ENCODE measurements at regions of chr7 and their contacts with region 1.

Region 1: GRCh38 chr7:30019960-30020359 is 6.5 kb downstream of the FKBP14 start:
- DNase-seq: no peak
- H3K4me3 ChIP-seq: no peak overlapping the region
- H3K27ac ChIP-seq: no peak overlapping the region
- H3K4me1 ChIP-seq: peaks cover 10% of the 10 kb centered on the region
- H3K27me3 ChIP-seq: no peaks in the 10 kb centered on the region
- CTCF ChIP-seq: no peak

Region 2: DNA sequence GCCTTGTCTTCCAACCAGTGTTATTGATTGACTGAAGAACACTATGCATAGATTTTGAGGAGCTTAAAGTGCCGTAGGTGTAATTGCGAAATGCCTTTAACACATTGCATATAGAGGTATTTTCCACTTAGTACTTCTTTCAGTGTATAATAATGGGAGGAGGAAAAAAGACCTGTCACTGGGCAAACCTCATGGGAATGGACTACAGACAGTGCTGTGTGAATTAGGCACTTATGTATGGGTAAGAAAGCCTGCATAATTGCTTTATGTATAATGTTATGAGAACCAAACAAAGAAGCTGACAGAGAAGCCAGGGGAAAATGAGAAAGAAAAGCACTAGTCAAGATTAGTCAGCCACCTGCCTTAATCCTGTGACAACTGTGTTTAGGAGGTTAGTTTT is 18.0 kb before region 1 on chr7:
- CTCF ChIA-PET with region 1: no interaction called
- POLR2A ChIA-PET with region 1: no interaction called
- intact Hi-C with region 1: loop called (anchors 2 kb)
- DNase-seq: peak; percentile 49
- H3K4me3 ChIP-seq: no peak overlapping the region
- H3K27ac ChIP-seq: no peak overlapping the region
- H3K4me1 ChIP-seq: peaks cover 12% of the 10 kb centered on the region
- H3K27me3 ChIP-seq: no peaks in the 10 kb centered on the region
- CTCF ChIP-seq: no peak

Measured in A673 (cell line).